Common myeloid progenitor, CD34-positive (primary cell): ENCODE measurements at regions of chr11 and their contacts with region 1.

Region 1: DNA sequence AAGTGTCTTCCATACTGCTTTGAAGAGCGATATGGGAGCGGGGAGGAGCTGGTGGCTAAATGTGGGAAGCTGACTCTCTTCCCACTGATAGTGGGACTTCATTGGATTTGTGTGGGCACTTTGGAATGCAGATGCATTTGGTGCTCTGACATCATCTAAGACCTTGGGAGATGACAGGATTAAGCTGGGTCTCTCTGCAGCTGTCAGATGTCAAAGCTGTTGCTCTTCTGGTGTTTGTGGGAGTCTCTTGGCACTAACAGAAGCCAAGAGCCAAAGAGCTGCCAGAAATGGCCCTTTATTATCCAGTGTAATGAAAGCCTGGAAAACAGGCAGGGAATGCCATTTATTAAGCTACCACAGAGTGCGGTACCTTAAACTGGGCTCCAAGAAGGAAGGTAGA is 20.6 kb downstream of the GRAMD1B start:
- DNase-seq: no peak
- H3K4me3 ChIP-seq: no peak overlapping the region
- H3K27ac ChIP-seq: no peak overlapping the region
- H3K4me1 ChIP-seq: peaks cover 3 to 27% (median 17%) of the 10 kb centered on the region in 4 experiments
- H3K27me3 ChIP-seq: no peaks in the 10 kb centered on the region

Region 2: DNA sequence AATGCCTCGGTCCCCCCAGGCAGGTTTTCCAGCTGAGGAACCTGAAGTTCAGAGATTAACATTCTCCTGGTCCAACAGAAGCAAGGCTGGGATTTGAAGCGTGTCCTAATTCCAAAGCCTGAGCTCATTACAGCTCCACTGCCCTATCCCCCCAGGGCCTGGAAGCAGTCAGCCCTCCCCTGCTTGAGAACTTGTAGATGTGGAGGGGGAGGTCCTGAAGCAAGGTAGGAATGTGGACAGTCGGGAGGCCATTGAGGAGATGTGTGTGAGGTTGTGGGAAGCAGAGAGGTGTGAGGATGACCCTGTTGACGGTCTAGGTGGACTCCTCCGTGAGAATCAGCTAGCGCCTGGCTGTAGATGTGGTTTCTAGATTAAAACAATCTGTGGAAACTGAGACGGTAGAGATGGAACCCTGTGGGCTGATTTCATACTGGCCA is 12.4 kb before region 1 on chr11:
- CTCF ChIA-PET with region 1: interaction called, 18 read pairs
- POLR2A ChIA-PET with region 1: no interaction called
- DNase-seq: no peak
- H3K4me3 ChIP-seq: no peak overlapping the region
- H3K27ac ChIP-seq: no peak overlapping the region
- H3K4me1 ChIP-seq: peaks cover 3 to 35% (median 9%) of the 10 kb centered on the region in 4 experiments
- H3K27me3 ChIP-seq: no peaks in the 10 kb centered on the region